ENCODE measurements at regions of chr2 and their contacts with region 1.

Region 1: GRCh38 chr2:30711646-30712085 is 95.6 kb downstream of the CAPN13 start:
- DNase-seq: peak; percentile 72 to 92
- ATAC-seq: peak; percentile 57 to 78 (median 67)
- H3K4me3 ChIP-seq: no peak overlapping the region
- H3K27ac ChIP-seq: no peak overlapping the region
- H3K4me1 ChIP-seq: peaks cover 0 to 32% (median 8%) of the 10 kb centered on the region in 9 donors
- H3K27me3 ChIP-seq: no peaks in the 10 kb centered on the region
- CTCF ChIP-seq: peak; percentile 92 to 100 (median 99)

Region 2: DNA sequence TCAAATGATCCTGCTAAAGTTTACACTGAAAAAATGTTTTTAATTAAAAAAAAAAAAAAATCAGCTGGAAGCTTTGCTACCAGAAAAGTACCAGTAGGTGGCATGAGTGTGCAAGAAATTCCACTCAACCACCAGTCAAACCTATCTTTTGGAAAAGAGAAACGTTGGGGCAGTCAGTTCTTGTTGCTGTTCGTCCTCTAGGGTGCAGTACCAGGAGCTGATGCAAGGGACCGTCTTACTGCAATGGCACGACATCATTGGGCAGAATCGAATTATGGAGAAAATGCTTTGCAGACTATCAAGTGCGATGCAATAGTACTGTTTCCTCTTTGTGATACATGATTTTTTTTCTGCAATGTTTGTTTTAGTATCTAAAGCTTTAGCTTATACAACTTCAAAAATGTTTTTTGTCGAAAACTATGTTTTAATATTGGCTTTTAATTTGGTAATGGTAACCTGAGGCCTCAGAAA is 546.6 kb before region 1 on chr2:
- intact Hi-C with region 1: loop called in 7 of 10 experiments (anchors 2 to 5 kb)
- DNase-seq: peak in 1 of 2 donors; percentile 73
- ATAC-seq: peak; percentile 73 to 92 (median 85)
- H3K4me3 ChIP-seq: no peak overlapping the region
- H3K27ac ChIP-seq: no peak overlapping the region
- H3K4me1 ChIP-seq: peaks cover 0 to 29% (median 16%) of the 10 kb centered on the region in 9 donors
- H3K27me3 ChIP-seq: no peaks in the 10 kb centered on the region
- CTCF ChIP-seq: peak; percentile 67 to 95 (median 89)

Region 3: GRCh38 chr2:30208452-30208851 is 503.2 kb before region 1 on chr2:
- intact Hi-C with region 1: loop called in 9 of 10 experiments (anchors 1 to 5 kb)
- DNase-seq: peak; percentile 46 to 75
- ATAC-seq: peak; percentile 75 to 95 (median 92)
- H3K4me3 ChIP-seq: no peak overlapping the region
- H3K27ac ChIP-seq: peak overlapping the region in 3 of 10 donors; percentile 4 to 45 (median 10)
- H3K4me1 ChIP-seq: peaks cover 2 to 20% (median 8%) of the 10 kb centered on the region in 9 donors
- H3K27me3 ChIP-seq: no peaks in the 10 kb centered on the region
- CTCF ChIP-seq: peak; percentile 83 to 95 (median 91)

Region 4: DNA sequence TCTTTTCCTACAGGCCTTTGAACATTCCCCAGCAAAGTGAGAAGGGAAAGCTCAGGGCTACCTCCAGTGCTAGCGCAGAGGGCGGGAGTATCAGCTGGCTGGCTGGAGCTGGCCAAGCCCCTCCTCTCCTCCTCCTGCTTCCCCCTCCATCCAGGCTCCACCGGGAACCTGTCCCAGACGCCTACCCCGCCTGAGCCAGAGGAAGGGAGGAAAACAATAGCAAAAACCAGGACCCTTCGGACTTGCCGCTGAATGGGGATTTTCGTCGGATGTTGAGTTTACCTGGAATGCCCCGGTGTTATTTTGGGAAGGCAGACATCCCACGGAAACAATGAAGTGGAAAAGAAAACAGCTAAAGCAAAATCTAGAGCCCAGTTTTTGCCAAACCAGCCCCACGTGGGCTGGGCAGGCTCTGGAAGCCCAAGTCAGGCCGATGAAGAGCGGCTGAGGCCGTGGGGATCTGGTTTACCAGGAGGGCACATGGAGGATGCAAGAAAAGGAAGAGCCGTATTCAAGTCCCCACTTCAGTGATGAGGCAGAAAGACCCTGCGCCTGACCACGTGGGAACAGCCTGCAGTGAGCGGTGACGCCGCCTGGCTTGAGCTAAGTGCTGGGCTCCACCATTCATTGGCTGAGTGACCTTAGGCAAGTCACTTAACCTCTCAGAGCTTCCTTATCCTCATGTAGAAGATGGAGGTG is 365.0 kb before region 1 on chr2:
- intact Hi-C with region 1: loop called in 1 of 10 experiments (anchors 5 kb)
- DNase-seq: peak; percentile 80 to 91
- ATAC-seq: peak; percentile 94 to 98 (median 96)
- H3K4me3 ChIP-seq: peak overlapping the region; percentile 34 to 60 (median 48)
- H3K27ac ChIP-seq: peak overlapping the region; percentile 47 to 91 (median 82)
- H3K4me1 ChIP-seq: peaks cover 8 to 61% (median 36%) of the 10 kb centered on the region in 9 donors
- H3K27me3 ChIP-seq: no peaks in the 10 kb centered on the region
- CTCF ChIP-seq: peak in 1 of 9 donors; percentile 21

Region 5: GRCh38 chr2:30385327-30385726 is 326.3 kb before region 1 on chr2:
- intact Hi-C with region 1: no loop called
- DNase-seq: no peak
- ATAC-seq: peak in 5 of 8 donors; percentile 55 to 74 (median 69)
- H3K4me3 ChIP-seq: no peak overlapping the region
- H3K27ac ChIP-seq: no peak overlapping the region
- H3K4me1 ChIP-seq: no peaks in the 10 kb centered on the region
- H3K27me3 ChIP-seq: no peaks in the 10 kb centered on the region
- CTCF ChIP-seq: no peak

Region 6: GRCh38 chr2:30421604-30422443 is 289.8 kb before region 1 on chr2:
- intact Hi-C with region 1: no loop called
- DNase-seq: no peak
- ATAC-seq: peak; percentile 46 to 93 (median 79)
- H3K4me3 ChIP-seq: peak overlapping the region in 4 of 10 donors; percentile 12 to 21 (median 18)
- H3K27ac ChIP-seq: peak overlapping the region; percentile 44 to 88 (median 81)
- H3K4me1 ChIP-seq: peaks cover 4 to 41% (median 32%) of the 10 kb centered on the region in 9 donors
- H3K27me3 ChIP-seq: no peaks in the 10 kb centered on the region
- CTCF ChIP-seq: peak in 2 of 9 donors; percentile 8 to 13

Region 7: GRCh38 chr2:30565851-30566358 is 145.8 kb before region 1 on chr2:
- intact Hi-C with region 1: loop called in 1 of 10 experiments (anchors 10 kb)
- DNase-seq: peak in 1 of 2 donors; percentile 56
- ATAC-seq: peak; percentile 66 to 88 (median 84)
- H3K4me3 ChIP-seq: no peak overlapping the region
- H3K27ac ChIP-seq: peak overlapping the region in 9 of 10 donors; percentile 10 to 83 (median 51)
- H3K4me1 ChIP-seq: peaks cover 0 to 23% (median 7%) of the 10 kb centered on the region in 9 donors
- H3K27me3 ChIP-seq: no peaks in the 10 kb centered on the region
- CTCF ChIP-seq: no peak

Region 8: GRCh38 chr2:30601375-30601774 is 110.3 kb before region 1 on chr2:
- intact Hi-C with region 1: no loop called
- DNase-seq: no peak
- ATAC-seq: peak in 4 of 8 donors; percentile 23 to 55 (median 44)
- H3K4me3 ChIP-seq: no peak overlapping the region
- H3K27ac ChIP-seq: no peak overlapping the region
- H3K4me1 ChIP-seq: peaks cover 0 to 22% (median 4%) of the 10 kb centered on the region in 9 donors
- H3K27me3 ChIP-seq: no peaks in the 10 kb centered on the region
- CTCF ChIP-seq: no peak

Region 9: DNA sequence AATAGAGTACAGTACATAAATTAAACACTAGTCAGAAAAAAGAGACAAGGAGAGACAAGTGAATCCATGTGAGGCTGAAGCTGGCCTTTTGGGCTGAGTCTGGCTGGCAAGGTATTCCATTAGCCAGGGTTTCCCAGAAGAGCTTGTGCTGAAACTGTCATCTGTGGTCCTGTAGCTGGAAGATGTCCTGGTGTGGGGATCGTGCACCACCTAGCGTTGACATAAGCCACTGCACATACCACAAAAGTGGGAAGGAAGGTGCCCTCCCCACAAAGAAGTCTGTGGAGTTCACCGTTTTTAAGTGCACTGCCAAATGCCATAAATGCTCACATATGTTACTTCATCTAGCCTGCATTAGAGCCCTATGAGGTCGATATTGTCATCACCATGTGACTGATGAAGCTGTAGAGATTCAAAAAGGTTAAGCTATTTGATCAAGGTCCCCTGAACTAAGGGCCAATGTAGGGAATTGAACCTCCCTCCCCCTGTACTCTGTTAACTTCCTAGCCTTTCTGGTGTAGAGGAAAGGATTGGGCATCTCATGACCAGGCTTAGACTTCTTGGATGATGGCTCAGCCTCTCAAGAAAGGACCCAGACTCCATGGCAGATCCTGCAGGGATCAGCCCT is 458.5 kb after region 1 on chr2:
- intact Hi-C with region 1: loop called (anchors 1 to 10 kb)
- DNase-seq: peak; percentile 29 to 51
- ATAC-seq: peak in 7 of 8 donors; percentile 63 to 92 (median 83)
- H3K4me3 ChIP-seq: no peak overlapping the region
- H3K27ac ChIP-seq: no peak overlapping the region
- H3K4me1 ChIP-seq: no peaks in the 10 kb centered on the region
- H3K27me3 ChIP-seq: peaks cover 0 to 2% (median 0%) of the 10 kb centered on the region in 7 donors
- CTCF ChIP-seq: peak; percentile 83 to 93 (median 91)

Region 10: DNA sequence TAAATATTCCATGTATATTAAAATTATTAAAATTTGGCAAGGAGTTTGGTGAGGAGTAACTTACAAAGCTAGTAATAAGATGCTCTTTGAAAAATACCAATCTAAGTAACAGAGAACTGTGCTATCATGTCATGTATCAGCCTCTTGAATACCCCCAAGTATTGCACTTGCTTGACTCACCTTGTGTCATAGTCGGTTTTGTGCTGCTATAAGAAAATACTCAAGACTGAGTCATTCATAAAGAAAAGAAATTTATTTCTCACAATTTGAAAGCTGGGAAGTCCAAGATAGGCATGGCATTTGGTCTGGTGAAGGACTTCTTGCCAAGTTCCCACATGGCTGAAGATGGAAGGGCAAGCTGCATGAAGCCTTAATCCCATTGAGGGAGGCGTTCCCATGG is 1119.9 kb after region 1 on chr2:
- intact Hi-C with region 1: loop called in 2 of 10 experiments (anchors 5 to 10 kb)
- DNase-seq: no peak
- ATAC-seq: no peak
- H3K4me3 ChIP-seq: no peak overlapping the region
- H3K27ac ChIP-seq: no peak overlapping the region
- H3K4me1 ChIP-seq: peaks cover 0 to 6% (median 0%) of the 10 kb centered on the region in 9 donors
- H3K27me3 ChIP-seq: no peaks in the 10 kb centered on the region
- CTCF ChIP-seq: no peak

Measured in heart right ventricle (tissue), 16 donors.